ENCODE measurements at regions of chr2 and their contacts with region 1.

Region 1: GRCh38 chr2:65432227-65433190 is at the start of gene SPRED2:
- DNase-seq: peak; percentile 95 to 97 (median 97)
- ATAC-seq: peak; percentile 55 to 77 (median 62)
- H3K4me3 ChIP-seq: peak within 1 kb of the TSS; percentile 58 to 98 (median 89)
- H3K27ac ChIP-seq: peak within 1 kb of the TSS; percentile 88 to 98 (median 92)
- H3K4me1 ChIP-seq: peaks cover 0 to 46% (median 28%) of the 10 kb centered on the region in 12 donors
- H3K27me3 ChIP-seq: peaks cover 0 to 4% (median 0%) of the 10 kb centered on the region in 9 donors
- CTCF ChIP-seq: peak in 4 of 12 donors; percentile 17 to 41 (median 26)
- POLR2A ChIP-seq: peak in 1 of 2 donors; percentile 66
- total RNA-seq, gene SPRED2: 10.2 to 24.4 (median 17.5) TPM

Region 2: DNA sequence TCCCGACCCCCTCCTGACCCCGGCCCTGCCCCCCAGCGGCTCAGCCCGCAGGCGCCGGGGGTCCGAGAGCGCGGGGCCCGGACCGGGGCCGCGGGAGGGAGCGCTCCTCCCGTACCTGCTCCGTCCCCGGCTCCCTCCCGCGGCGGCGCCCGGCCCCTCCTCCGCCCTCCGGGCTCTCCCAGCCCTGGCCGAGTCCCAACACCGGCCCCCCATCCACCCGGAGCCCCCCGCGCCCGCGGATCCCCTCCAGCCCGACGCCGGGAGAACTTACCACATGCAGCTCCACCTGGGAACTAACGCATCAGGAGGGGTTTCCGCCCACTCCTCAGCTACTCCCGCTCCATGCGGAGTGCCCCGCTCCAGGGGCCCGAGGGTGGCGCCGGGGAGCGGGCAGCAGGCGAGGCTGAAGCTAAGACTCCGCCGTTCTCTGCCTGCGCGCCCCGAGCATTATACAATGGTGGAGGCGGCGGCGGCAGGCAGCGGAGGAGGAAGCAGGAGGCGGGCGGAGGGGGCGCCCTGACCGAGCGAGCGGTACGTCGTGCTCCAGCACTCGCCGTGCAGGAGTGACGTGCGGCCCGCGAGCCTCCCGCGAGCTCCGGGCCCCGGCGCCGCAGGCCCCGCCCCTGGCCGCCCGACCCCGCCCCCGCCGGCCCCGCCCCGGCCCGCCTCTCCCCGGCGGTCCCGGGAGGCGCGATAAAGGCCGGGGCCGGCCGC is 779.0 kb before region 1 on chr2 and contains the start of gene SERTAD2:
- intact Hi-C with region 1: loop called in 1 of 10 experiments (anchors 10 kb)
- DNase-seq: peak; percentile 91 to 96 (median 93)
- ATAC-seq: peak; percentile 75 to 93 (median 91)
- H3K4me3 ChIP-seq: peak within 1 kb of the TSS; percentile 74 to 95 (median 90)
- H3K27ac ChIP-seq: peak within 1 kb of the TSS; percentile 96 to 100 (median 99)
- H3K4me1 ChIP-seq: peaks cover 0 to 69% (median 41%) of the 10 kb centered on the region in 12 donors
- H3K27me3 ChIP-seq: no peaks in the 10 kb centered on the region
- CTCF ChIP-seq: peak in 5 of 12 donors; percentile 7 to 34 (median 16)
- POLR2A ChIP-seq: peak in 1 of 2 donors; percentile 79
- total RNA-seq, gene SERTAD2: 12.2 to 21.6 (median 16.1) TPM

Region 3: DNA sequence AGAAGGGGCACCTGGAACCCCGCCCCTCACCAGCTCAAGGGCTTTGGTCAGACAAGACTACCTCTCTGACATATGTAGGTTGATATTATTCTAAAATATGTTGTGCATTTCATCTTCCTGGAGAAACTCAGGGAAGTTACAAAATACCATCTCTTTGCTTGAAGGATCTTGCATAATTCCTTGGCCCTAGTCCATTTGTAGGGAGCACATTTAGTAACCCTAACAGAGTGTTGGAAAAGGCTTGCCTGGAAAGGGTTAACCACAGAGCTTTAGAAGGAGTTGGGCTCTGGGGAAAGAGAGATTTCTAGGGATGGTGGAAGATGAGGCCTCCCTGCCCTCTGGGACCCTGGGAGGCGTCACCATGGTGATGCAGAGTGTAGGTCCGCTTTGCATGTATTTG is 586.3 kb before region 1 on chr2:
- intact Hi-C with region 1: no loop called
- DNase-seq: no peak
- ATAC-seq: no peak
- H3K4me3 ChIP-seq: no peak overlapping the region
- H3K27ac ChIP-seq: peak overlapping the region in 1 of 12 donors; percentile 29
- H3K4me1 ChIP-seq: peaks cover 0 to 49% (median 0%) of the 10 kb centered on the region in 12 donors
- H3K27me3 ChIP-seq: no peaks in the 10 kb centered on the region
- CTCF ChIP-seq: no peak
- POLR2A ChIP-seq: no peak

Region 4: DNA sequence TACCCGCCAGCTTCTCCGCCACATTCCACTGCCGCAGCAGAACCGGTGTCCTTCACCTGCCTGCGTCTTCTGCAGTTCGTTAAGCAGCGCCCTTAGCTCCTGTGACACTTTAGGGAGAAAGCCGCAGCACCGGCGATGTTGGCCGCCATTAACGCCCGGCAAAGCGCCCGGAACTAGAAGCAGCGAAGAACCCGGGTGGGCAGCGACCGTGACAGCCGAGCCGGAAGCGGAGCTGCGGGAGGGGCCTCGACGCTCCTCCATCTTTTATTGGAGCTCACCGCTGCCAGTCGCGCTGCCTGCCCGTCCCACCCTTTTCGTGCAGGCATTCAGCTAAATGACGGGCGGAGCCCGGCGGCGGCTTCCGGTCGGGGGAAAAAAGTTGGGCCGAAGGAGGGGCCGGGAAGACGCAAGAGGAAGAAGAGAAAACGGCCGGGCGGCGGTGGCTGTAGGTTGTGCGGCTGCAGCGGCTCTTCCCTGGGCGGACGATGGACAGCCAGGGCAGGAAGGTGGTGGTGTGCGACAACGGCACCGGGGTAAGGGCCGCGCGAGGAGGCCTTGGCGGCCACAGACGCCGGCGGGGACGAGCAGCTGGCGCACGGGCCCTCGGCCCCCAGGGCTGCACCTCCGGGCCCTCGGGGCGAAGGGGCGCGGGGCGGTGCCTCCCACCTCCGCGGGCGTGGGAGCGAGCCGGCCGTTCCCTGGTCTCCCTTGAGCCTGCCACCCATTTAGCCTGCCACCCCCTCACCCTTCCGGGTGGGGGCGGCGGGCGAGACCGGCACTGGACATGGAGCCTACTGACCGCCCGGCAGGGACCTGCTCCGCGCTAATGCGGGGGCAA is 204.9 kb before region 1 on chr2 and contains the start of gene ACTR2:
- intact Hi-C with region 1: loop called in 1 of 10 experiments (anchors 5 kb)
- DNase-seq: peak; percentile 97 to 98 (median 98)
- ATAC-seq: peak; percentile 97 to 100 (median 99)
- H3K4me3 ChIP-seq: peak within 1 kb of the TSS; percentile 68 to 100 (median 94)
- H3K27ac ChIP-seq: peak within 1 kb of the TSS; percentile 89 to 100 (median 98)
- H3K4me1 ChIP-seq: peaks cover 6 to 52% (median 31%) of the 10 kb centered on the region in 12 donors
- H3K27me3 ChIP-seq: no peaks in the 10 kb centered on the region
- CTCF ChIP-seq: no peak
- POLR2A ChIP-seq: peak in 1 of 2 donors; percentile 59
- total RNA-seq, gene ACTR2: 32.6 to 216 (median 117) TPM

Region 5: DNA sequence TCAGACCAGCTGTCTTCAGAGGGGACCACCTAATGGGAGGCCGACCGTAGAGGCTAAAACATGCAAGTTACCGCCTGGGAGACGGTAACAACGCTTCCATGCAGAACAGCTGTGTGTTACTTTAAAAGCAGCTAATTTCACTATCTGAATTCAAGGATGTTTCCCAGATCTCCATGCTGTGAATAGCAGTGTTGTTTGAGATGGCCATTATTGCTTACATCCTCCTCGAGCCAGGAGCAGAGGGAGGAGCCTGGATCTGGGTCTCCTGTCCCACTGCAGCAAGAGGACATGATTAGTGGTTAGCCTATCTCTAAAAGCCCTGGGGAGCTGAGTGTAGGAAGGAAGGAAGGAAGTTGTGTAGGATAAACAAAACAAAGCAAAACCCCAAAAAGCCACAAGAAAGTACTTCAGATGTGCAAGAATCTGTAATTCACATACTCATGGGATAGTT is 154.0 kb before region 1 on chr2:
- intact Hi-C with region 1: loop called in 4 of 10 experiments (anchors 5 kb)
- DNase-seq: peak in 3 of 5 donors; percentile 26 to 44 (median 42)
- ATAC-seq: peak; percentile 35 to 72 (median 56)
- H3K4me3 ChIP-seq: no peak overlapping the region
- H3K27ac ChIP-seq: peak overlapping the region in 9 of 12 donors; percentile 28 to 59 (median 37)
- H3K4me1 ChIP-seq: peaks cover 7 to 55% (median 29%) of the 10 kb centered on the region in 12 donors
- H3K27me3 ChIP-seq: peaks cover 0 to 4% (median 0%) of the 10 kb centered on the region in 9 donors
- CTCF ChIP-seq: no peak
- POLR2A ChIP-seq: no peak

Region 6: GRCh38 chr2:65316072-65316471 is 116.4 kb before region 1 on chr2:
- intact Hi-C with region 1: loop called in 5 of 10 experiments (anchors 2 to 10 kb)
- DNase-seq: peak; percentile 33 to 73 (median 71)
- ATAC-seq: peak; percentile 66 to 73 (median 70)
- H3K4me3 ChIP-seq: no peak overlapping the region
- H3K27ac ChIP-seq: peak overlapping the region in 6 of 12 donors; percentile 9 to 67 (median 48)
- H3K4me1 ChIP-seq: peaks cover 0 to 22% (median 9%) of the 10 kb centered on the region in 12 donors
- H3K27me3 ChIP-seq: no peaks in the 10 kb centered on the region
- CTCF ChIP-seq: no peak
- POLR2A ChIP-seq: no peak

Region 7: DNA sequence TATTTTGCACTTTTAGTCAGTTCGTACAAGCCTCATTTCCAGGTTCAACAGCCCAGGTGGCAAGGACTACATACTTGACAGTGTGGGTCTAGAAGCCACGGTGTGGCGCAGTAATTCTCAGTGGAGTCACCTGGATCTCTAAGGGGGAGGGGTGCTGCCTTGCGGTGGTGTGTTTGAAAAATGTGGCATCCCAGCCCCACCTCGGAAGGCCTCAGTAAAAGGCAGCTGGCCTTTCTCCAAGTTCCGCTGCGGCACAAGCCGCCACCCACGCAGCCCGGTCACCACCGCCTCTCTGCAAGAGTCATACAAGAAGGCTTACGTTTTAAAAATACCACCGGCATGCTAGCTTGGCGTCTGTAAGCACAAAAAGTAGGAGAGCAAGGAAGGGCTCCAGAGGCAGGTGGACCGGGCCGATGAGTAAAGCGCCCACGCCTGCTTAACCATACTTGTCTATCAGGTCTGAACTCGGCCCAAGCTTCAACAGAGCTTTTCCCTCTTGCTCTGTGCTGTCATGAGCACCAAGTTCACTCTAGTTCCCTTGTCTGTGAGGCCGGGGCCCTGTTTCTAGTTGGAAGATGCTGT is 49.6 kb before region 1 on chr2:
- intact Hi-C with region 1: loop called in 6 of 10 experiments (anchors 2 to 5 kb)
- DNase-seq: peak; percentile 80 to 88 (median 86)
- ATAC-seq: peak; percentile 43 to 82 (median 78)
- H3K4me3 ChIP-seq: peak overlapping the region in 8 of 12 donors; percentile 8 to 33 (median 22)
- H3K27ac ChIP-seq: peak overlapping the region; percentile 65 to 81 (median 71)
- H3K4me1 ChIP-seq: peaks cover 6 to 81% (median 59%) of the 10 kb centered on the region in 12 donors
- H3K27me3 ChIP-seq: no peaks in the 10 kb centered on the region
- CTCF ChIP-seq: peak in 3 of 12 donors; percentile 5 to 27 (median 6)
- POLR2A ChIP-seq: no peak

Region 8: DNA sequence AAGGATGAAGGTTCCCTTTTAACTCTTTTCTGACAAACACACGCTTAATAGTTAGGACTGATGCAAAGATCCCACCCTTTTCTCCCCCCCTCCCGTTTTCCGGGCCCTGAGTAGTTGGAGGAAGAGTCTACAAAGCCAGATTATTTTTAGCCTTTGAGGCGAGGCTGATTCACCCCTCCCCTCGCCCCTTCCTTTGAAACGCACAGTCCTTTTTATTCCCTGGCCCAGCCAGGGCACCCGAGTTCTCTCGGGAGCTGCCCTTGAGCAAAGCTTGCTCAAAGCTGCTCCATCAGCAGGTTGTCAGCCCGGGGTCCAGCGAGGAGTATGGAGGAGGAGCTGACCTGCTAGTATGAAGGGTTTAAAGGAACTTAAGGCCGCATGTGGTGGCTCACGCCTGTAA is 47.0 kb after region 1 on chr2:
- intact Hi-C with region 1: no loop called
- DNase-seq: peak; percentile 20 to 73 (median 38)
- ATAC-seq: peak; percentile 30 to 90 (median 76)
- H3K4me3 ChIP-seq: no peak overlapping the region
- H3K27ac ChIP-seq: peak overlapping the region in 5 of 12 donors; percentile 4 to 54 (median 44)
- H3K4me1 ChIP-seq: peaks cover 0 to 15% (median 4%) of the 10 kb centered on the region in 12 donors
- H3K27me3 ChIP-seq: no peaks in the 10 kb centered on the region
- CTCF ChIP-seq: no peak
- POLR2A ChIP-seq: no peak

Region 9: GRCh38 chr2:65545837-65546805 is 113.6 kb after region 1 on chr2:
- intact Hi-C with region 1: loop called in 7 of 10 experiments (anchors 5 to 10 kb)
- DNase-seq: peak in 3 of 5 donors; percentile 24 to 46 (median 29)
- ATAC-seq: peak; percentile 53 to 95 (median 90)
- H3K4me3 ChIP-seq: no peak overlapping the region
- H3K27ac ChIP-seq: peak overlapping the region in 11 of 12 donors; percentile 13 to 74 (median 55)
- H3K4me1 ChIP-seq: peaks cover 0 to 21% (median 12%) of the 10 kb centered on the region in 12 donors
- H3K27me3 ChIP-seq: no peaks in the 10 kb centered on the region
- CTCF ChIP-seq: no peak
- POLR2A ChIP-seq: no peak

Measured in heart left ventricle (tissue), 16 donors.